ENCODE measurements at regions of chr11 and their contacts with region 1.

Region 1: DNA sequence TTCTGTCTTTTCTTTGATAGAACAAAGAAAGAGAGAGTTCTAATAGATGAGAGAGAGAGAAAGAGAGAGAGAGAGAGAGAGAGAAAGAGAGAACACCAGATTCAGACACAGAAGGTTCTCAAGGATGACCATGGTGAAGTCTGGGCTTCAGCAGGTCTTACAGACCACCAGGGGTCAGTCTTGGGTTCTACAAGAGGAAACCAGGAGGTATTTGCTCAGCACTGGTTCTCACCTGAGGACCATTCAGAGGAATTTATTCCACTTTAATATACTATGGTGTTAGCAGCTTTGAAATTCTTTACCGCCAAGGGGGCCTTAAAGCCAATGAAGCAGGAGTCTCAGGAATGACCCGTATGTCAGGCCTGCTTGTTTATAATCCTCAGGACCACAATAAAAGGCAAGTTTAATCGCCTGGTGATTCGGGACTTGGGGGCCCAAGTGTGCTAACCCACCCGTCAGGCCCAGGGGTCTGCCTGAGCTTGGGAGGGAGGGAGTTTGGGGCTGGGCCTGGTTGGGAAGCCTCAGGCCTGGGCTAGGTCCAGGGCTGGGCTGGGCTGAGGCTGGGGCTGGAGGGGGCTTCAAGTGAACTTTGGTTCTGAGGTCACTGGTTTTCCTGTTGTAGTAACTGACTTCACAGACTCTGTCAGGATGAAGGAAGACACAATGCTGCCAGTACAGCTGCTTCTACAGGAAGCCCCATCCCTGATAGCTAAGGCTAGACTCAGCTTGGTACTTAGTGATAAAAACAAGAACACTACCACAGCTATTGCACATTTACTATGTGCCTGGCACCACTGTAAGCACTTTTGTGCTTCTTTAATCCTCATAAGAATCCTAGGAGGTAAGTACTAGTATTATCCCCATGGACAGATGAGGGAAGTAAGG is 179.2 kb upstream of the ZBED5 start:
- DNase-seq: peak in 2 of 4 donors; percentile 45 to 80
- ATAC-seq: peak; percentile 92
- H3K4me3 ChIP-seq: no peak overlapping the region
- H3K27ac ChIP-seq: no peak overlapping the region
- H3K4me1 ChIP-seq: no peaks in the 10 kb centered on the region
- H3K27me3 ChIP-seq: no peaks in the 10 kb centered on the region
- CTCF ChIP-seq: peak; percentile 47 to 61

Region 2: GRCh38 chr11:11215944-11216343 is 178.9 kb after region 1 on chr11:
- intact Hi-C with region 1: no loop called
- DNase-seq: peak in 1 of 4 donors; percentile 27
- ATAC-seq: no peak
- H3K4me3 ChIP-seq: no peak overlapping the region
- H3K27ac ChIP-seq: no peak overlapping the region
- H3K4me1 ChIP-seq: no peaks in the 10 kb centered on the region
- H3K27me3 ChIP-seq: no peaks in the 10 kb centered on the region
- CTCF ChIP-seq: no peak

Region 3: DNA sequence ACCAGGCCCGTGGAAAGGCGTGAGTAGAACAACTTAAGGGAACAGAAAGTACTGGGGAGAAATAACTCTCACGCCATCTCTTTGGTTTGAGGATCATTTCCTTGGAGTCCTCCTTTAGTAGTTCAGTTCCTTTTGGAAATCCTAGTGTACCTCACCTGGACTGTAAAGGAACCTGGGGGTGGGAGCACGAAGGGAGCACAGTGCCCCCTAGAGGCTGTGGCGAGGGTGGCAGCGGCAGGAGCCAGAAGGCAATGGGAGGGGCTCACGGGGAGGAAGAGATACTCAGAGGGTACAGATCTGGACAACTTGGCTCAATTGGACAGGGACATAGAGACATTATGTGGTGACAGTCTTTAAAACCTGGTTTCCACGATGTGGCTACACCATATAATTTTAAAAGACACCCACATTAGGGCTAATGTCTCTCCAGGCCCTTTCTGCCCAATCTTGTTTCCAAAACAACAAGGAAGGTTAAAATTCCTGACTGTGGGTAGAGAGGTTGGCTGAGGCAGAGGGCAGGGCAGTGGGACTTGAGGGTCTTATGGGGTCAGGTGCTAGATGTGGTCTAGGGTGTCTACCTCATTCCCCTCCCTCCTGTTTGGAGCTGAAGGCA is 229.0 kb after region 1 on chr11:
- intact Hi-C with region 1: loop called in 1 of 2 experiments (anchors 10 kb)
- DNase-seq: peak in 1 of 4 donors; percentile 23
- ATAC-seq: peak; percentile 95
- H3K4me3 ChIP-seq: no peak overlapping the region
- H3K27ac ChIP-seq: no peak overlapping the region
- H3K4me1 ChIP-seq: no peaks in the 10 kb centered on the region
- H3K27me3 ChIP-seq: no peaks in the 10 kb centered on the region
- CTCF ChIP-seq: peak; percentile 77 to 81

Region 4: DNA sequence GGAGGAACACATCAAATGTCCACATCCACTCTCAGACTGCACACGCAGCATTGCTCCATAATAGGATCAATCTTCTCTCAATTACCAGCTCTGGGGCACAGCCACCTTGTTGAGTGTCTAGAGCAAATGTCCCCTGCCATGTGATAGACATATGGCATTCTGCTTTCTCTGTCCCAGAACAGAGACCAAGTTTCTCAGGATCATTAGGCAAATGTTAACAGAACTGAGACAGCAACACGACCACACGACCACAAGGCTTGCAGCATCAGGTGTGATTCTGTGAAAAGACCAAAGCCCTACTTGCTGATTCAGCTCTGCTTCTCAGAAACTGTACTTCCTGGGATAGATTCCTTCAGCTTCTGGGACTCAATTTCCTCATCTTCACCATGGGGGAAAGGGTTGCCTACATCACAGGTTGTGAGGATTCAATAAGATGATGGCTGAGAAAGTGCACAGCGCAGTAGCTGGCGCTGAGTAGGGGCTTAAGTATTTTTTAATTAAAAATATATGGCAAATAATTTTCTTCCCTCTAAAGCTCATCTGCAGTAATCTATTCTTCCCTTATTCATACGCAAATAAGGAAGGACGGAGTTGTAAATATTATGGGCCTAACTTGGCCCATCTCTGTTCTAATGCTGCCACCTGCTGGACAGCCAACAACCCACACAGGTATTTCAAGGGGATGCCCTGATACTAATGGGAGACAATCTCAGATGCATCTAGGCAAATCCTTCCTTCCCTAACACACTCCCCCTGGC is 750.4 kb after region 1 on chr11:
- intact Hi-C with region 1: loop called in 1 of 2 experiments (anchors 5 kb)
- DNase-seq: peak; percentile 21 to 80 (median 64)
- ATAC-seq: peak; percentile 97
- H3K4me3 ChIP-seq: no peak overlapping the region
- H3K27ac ChIP-seq: no peak overlapping the region
- H3K4me1 ChIP-seq: no peaks in the 10 kb centered on the region
- H3K27me3 ChIP-seq: no peaks in the 10 kb centered on the region
- CTCF ChIP-seq: peak; percentile 74 to 81

Measured in left lung (tissue), 14 donors.